ENCODE measurements at regions of chr22 and their contacts with region 1.

Region 1: GRCh38 chr22:48954781-48955311 is 872.8 kb downstream of the BRD1 start:
- DNase-seq: no peak
- ATAC-seq: no peak
- H3K4me3 ChIP-seq: no peak overlapping the region
- H3K27ac ChIP-seq: no peak overlapping the region
- H3K4me1 ChIP-seq: no peaks in the 10 kb centered on the region
- H3K27me3 ChIP-seq: no peaks in the 10 kb centered on the region
- CTCF ChIP-seq: no peak
- POLR2A ChIP-seq: no peak
- RAD21 ChIP-seq: no peak

Region 2: DNA sequence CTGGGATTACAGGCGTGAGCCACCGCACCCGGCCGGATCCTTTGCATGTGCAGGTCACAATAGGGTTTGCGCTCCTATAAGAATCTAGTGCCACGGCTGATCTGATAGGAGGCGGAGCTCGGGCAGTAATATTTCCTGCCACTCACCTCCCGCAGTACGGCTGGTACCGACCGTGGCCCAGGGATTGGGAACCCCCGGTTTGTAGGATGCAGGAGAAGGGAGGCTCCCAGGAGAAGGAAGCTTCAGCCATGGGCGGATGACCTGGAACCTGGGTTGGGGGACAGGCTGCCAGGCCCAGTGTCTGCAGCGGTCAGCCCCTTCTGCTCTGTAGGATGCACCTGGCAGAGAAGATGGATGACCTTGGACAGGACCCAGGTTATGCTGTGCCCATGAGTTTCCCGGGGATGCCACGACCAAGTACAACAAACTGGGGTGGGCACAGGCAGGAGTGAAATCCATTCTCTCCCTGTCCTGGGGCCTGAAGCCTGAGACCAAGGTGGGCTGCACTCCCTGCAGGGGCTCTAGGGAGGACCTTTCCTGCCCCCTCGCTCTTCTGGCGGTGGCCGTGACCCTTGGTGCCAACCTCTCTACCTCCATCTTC is 53.9 kb after region 1 on chr22:
- CTCF ChIA-PET with region 1: no interaction called
- POLR2A ChIA-PET with region 1: no interaction called
- dilution Hi-C with region 1: no loop called
- in situ Hi-C with region 1: loop called (anchors 10 kb)
- intact Hi-C with region 1: no loop called
- DNase-seq: no peak
- ATAC-seq: no peak
- H3K4me3 ChIP-seq: no peak overlapping the region
- H3K27ac ChIP-seq: no peak overlapping the region
- H3K4me1 ChIP-seq: no peaks in the 10 kb centered on the region
- H3K27me3 ChIP-seq: no peaks in the 10 kb centered on the region
- CTCF ChIP-seq: no peak
- POLR2A ChIP-seq: no peak
- RAD21 ChIP-seq: no peak